Activated B cell treated with CpG ODN at 0.5 μM for 24 hours (primary cell): ENCODE measurements at regions of chr11 and their contacts with region 1.

Region 1: GRCh38 chr11:45885274-45885920 is at the start of gene MAPK8IP1:
- DNase-seq: peak; percentile 61
- ATAC-seq: peak; percentile 88
- H3K4me3 Mint-ChIP-seq: peak within 1 kb of the TSS; percentile 80
- H3K27ac Mint-ChIP-seq: no peak within 1 kb of the TSS
- H3K4me1 Mint-ChIP-seq: peaks cover 10% of the 10 kb centered on the region
- H3K27me3 Mint-ChIP-seq: no peaks in the 10 kb centered on the region
- CTCF ChIP-seq: no peak
- total RNA-seq, gene MAPK8IP1: 1.9 and 3.4 TPM in 2 replicates

Region 2: DNA sequence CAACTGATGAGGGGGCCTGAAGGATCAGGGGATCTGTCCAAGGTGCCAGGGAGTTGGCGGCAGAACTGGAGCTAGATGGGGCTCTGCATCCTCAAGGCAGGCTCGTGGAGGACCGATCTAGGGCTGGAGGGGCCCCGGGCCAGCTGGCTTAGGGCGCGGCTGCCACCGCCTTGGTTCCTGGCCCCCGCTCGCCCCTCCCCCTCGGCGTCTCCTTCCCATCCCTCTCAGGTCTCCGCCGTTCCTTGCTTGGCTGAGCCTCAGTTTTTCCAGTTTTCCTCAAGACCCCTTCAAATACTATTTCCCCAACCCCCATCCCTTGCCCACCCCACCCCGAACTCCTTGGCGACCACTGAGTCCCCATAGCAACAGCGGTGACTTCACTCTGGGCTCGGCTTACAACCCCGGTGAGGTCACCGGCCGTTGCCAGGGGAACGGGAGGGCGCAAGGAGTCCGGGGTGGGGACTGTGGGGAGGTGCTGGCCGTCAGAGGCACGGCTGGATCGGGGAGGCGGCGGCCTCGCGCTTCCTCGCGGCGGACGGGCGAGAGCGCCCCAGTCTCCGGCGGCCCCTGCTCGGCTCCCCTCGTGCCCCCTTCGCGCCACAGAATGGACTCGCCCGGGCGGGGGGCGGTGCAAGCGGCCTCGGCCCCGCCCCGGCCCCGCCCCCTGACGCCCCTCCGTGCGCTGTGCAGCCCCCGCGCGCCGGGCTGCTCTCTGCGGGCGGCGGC is 14.2 kb after region 1 on chr11:
- CTCF ChIA-PET with region 1: no interaction called
- POLR2A ChIA-PET with region 1: interaction called, 3 read pairs
- intact Hi-C with region 1: loop called (anchors 1 kb)
- DNase-seq: peak; percentile 74
- ATAC-seq: peak; percentile 87
- H3K4me3 Mint-ChIP-seq: peak overlapping the region; percentile 76
- H3K27ac Mint-ChIP-seq: no peak overlapping the region
- H3K4me1 Mint-ChIP-seq: peaks cover 8% of the 10 kb centered on the region
- H3K27me3 Mint-ChIP-seq: peaks cover 25% of the 10 kb centered on the region
- CTCF ChIP-seq: no peak

Region 3: GRCh38 chr11:46006418-46007070 is 121.1 kb after region 1 on chr11:
- CTCF ChIA-PET with region 1: interaction called, 7 read pairs
- POLR2A ChIA-PET with region 1: no interaction called
- intact Hi-C with region 1: loop called (anchors 1 kb)
- DNase-seq: no peak
- ATAC-seq: peak; percentile 76
- H3K4me3 Mint-ChIP-seq: no peak overlapping the region
- H3K27ac Mint-ChIP-seq: no peak overlapping the region
- H3K4me1 Mint-ChIP-seq: peaks cover 3% of the 10 kb centered on the region
- H3K27me3 Mint-ChIP-seq: no peaks in the 10 kb centered on the region
- CTCF ChIP-seq: peak; percentile 20